ENCODE measurements at regions of chr6 and their contacts with region 1.

Region 1: GRCh38 chr6:148559848-148560433 is 186.9 kb upstream of the UST start:
- DNase-seq: peak; percentile 74
- ATAC-seq: peak; percentile 87
- H3K4me3 Mint-ChIP-seq: peak overlapping the region; percentile 57
- H3K27ac Mint-ChIP-seq: no peak overlapping the region
- H3K4me1 Mint-ChIP-seq: peaks cover 15% of the 10 kb centered on the region
- H3K27me3 Mint-ChIP-seq: peaks cover 9% of the 10 kb centered on the region
- CTCF ChIP-seq: peak; percentile 18

Region 2: GRCh38 chr6:148358188-148358785 is 201.7 kb before region 1 on chr6:
- CTCF ChIA-PET with region 1: no interaction called
- POLR2A ChIA-PET with region 1: no interaction called
- intact Hi-C with region 1: no loop called
- DNase-seq: no peak
- ATAC-seq: no peak
- H3K4me3 Mint-ChIP-seq: no peak overlapping the region
- H3K27ac Mint-ChIP-seq: no peak overlapping the region
- H3K4me1 Mint-ChIP-seq: no peaks in the 10 kb centered on the region
- H3K27me3 Mint-ChIP-seq: peaks cover 21% of the 10 kb centered on the region
- CTCF ChIP-seq: no peak

Region 3: DNA sequence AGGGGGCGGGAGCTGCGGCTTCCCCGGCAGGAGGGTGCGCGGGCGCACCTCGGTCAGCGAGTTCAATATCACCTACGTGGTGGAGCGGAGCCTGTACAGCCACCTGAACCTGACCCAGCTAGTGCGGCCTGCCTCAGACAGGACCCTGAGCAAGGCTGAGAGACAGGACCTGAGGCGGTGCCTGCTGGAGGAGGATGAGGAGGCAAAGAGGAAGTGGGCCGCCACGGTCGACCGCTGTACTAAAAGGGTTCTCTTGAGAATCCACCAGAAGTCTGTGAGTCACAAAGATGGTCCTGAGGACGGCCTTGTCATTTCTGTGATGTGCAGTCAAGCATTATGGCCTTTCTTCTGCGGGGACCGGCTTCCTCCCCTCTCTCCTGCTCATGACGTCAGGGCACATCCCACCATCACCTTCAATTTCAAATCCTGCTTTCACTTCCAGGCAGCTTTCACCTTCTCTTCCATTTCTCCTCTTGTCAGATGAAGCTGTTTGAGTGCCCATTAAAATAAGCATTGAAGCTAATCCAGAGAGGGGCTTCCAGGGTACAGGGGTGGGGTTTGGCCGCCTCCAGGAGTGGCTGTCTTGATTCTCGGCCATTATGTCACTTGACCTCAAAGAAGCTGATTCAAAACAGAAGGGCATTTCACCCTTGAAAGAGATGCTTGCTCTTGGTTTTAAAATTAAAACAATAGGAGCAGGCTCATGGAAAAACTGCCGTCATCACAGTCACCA is 39.7 kb before region 1 on chr6:
- CTCF ChIA-PET with region 1: interaction called, 3 read pairs
- POLR2A ChIA-PET with region 1: no interaction called
- intact Hi-C with region 1: loop called (anchors 1 kb)
- DNase-seq: peak; percentile 68
- ATAC-seq: peak; percentile 96
- H3K4me3 Mint-ChIP-seq: peak overlapping the region; percentile 64
- H3K27ac Mint-ChIP-seq: peak overlapping the region; percentile 82
- H3K4me1 Mint-ChIP-seq: peaks cover 66% of the 10 kb centered on the region
- H3K27me3 Mint-ChIP-seq: no peaks in the 10 kb centered on the region
- CTCF ChIP-seq: no peak

Region 4: DNA sequence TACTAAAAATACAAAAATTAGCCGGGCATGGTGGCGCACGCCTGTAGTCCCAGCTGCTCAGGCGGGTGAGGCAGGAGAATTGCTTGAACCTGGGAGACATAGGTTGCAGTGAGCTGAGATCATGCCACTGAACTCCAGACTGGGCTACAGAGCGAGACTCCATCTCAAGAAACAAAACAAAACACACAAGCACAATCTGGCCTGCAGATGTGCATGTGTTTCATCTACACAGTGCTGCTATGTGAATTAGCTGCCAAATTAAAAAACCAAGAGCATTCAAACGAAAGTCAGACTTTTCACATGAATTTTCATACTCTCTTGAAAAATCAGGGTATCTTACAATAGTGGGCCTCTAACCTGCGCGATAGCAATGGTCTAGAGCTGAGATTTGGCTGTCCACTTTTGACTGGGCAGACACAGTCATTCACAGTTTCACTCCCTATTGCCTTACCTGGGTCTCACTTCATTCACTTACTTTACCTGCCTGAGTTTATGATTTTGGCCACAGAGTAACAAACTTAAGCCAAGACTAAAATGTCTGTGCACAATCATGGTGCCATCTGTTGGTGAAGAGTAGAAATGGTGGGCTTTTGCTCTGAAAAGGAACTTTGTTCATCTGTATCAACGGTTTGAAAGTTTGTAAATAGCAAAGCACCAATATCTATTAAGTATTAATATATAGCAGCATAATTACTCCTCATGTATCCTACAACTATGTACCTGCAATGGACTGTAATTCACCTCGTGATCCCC is 48.4 kb after region 1 on chr6:
- CTCF ChIA-PET with region 1: interaction called, 3 read pairs
- POLR2A ChIA-PET with region 1: no interaction called
- intact Hi-C with region 1: loop called (anchors 1 kb)
- DNase-seq: no peak
- ATAC-seq: no peak
- H3K4me3 Mint-ChIP-seq: no peak overlapping the region
- H3K27ac Mint-ChIP-seq: no peak overlapping the region
- H3K4me1 Mint-ChIP-seq: no peaks in the 10 kb centered on the region
- H3K27me3 Mint-ChIP-seq: no peaks in the 10 kb centered on the region
- CTCF ChIP-seq: no peak

Region 5: DNA sequence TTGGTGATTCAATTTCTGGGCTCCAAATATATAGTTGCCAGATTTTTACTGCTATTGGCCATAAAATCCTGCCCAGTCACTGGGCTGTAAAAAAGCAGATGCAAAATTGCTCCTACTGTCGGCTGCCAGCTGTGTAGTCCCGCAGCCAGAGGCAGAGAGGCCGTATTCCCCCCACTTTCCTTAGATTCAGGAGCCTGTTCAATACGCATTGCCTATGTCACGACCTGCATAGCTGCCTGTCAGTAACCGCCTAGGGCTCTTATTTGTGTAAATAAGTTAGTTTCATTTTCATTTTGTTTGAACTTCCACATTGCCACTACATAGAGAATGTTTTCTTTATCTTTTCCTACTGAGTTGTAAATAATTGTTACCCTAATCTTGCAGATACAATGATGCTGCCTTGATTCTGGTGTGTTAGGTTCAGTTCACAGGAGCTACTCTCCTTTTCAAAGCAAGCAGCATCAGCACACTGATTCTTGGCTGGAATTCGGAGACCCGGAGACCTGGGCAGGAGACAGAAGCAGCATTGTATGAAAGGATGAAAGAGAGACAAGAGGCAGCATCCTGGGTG is 140.9 kb after region 1 on chr6:
- CTCF ChIA-PET with region 1: interaction called, 4 read pairs
- POLR2A ChIA-PET with region 1: interaction called, 5 read pairs
- intact Hi-C with region 1: loop called (anchors 1 kb)
- DNase-seq: no peak
- ATAC-seq: peak; percentile 58
- H3K4me3 Mint-ChIP-seq: peak overlapping the region; percentile 74
- H3K27ac Mint-ChIP-seq: peak overlapping the region; percentile 26
- H3K4me1 Mint-ChIP-seq: peaks cover 16% of the 10 kb centered on the region
- H3K27me3 Mint-ChIP-seq: no peaks in the 10 kb centered on the region
- CTCF ChIP-seq: no peak

Region 6: DNA sequence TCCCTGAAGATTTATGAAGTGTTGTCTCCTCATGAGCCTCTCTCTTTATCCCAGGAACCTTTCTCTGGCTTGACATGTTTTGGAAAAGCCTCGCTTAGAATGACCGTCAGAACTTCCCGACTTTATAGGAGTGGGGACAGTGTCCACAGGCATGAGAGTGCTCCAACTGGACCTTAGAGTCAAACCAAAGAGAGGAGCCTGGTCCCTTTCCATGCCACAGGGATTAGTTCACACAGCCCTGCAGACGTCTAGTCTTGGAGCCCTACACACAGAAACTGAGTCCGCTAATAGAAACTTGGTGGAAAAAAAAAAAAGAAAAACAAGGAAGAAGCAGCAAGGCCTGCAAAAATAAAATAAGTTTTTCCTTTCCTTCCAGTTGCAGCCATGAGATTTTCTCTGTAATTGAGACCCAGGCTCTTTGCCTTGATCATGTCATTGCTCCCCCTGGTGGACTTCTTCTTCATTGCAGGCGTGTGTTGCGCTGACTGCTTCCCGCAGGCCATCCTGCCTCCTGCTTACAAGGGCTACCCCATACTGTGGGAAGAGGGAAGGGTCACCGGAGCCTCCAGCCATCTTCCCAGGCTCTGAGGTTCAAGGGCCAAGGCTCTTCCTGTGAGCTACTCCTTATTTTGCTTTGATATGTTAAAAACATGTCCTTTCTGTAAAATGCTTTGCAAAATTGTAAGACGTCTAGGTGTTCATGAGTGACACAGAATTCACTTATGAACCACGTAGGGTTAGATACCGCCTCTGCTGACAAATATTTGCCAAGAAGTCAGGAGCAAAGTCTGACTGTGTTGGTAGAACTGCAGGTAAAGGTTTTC is 387.9 kb after region 1 on chr6:
- CTCF ChIA-PET with region 1: interaction called, 14 read pairs
- POLR2A ChIA-PET with region 1: no interaction called
- intact Hi-C with region 1: loop called (anchors 1 kb)
- DNase-seq: peak; percentile 61
- ATAC-seq: peak; percentile 96
- H3K4me3 Mint-ChIP-seq: no peak overlapping the region
- H3K27ac Mint-ChIP-seq: no peak overlapping the region
- H3K4me1 Mint-ChIP-seq: peaks cover 12% of the 10 kb centered on the region
- H3K27me3 Mint-ChIP-seq: no peaks in the 10 kb centered on the region
- CTCF ChIP-seq: peak; percentile 84